WTC11 (cell line): ENCODE measurements at regions of chr11 and their contacts with region 1.

Region 1: DNA sequence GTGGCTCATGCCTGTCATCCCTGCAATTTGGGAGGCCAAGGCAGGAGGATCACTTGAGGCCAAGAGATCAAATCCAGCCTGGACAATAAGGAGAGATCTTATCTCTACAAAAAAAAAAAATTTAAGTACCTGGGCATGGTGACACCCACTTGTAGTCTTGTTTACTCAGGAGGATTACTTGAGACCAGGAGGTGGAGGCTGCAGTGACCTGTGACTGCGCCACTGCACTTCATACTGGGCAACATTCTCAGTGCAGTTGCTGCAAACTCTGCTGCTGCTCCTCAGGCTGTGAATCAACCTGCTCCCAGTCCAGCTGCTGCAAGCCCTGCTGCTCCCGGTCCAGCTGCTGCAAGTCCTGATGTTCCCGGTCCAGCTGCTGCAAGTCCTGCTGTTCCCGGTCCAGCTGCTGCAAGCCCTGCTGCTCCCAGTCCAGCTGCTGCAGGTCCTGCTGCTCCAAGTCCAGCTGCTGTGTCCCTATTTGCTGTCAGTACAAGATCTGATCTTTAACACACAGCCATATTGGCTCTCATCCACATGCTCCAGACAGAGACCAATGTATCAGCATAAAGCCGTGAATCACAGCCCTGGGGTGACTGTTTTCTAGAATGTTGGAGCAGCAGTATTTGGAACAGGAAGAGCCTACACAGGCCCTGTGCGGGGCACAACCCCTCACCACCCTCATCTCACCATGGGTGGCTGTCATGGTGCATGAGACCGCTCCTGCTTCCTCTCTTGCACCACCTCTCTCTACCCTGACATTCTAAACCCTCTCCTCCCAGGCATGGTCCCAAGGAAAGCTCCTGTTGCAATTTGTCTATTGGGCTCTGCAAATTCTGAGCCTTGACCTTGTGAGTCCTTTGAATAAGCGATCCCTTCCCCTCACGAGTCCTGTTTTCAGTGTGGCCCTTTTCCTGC is 3.3 kb downstream of the KRTAP5-10 start:
- DNase-seq: no peak
- ATAC-seq: peak; percentile 25
- H3K4me3 Mint-ChIP-seq: no peak overlapping the region
- H3K27ac Mint-ChIP-seq: peak overlapping the region; percentile 7; the same call in 1 of the 2 replicates
- H3K4me1 Mint-ChIP-seq: peaks cover 34% of the 10 kb centered on the region
- H3K27me3 Mint-ChIP-seq: peaks cover 3% of the 10 kb centered on the region
- CTCF ChIP-seq: no peak

Region 2: GRCh38 chr11:71580057-71581003 is 11.6 kb after region 1 on chr11:
- CTCF ChIA-PET with region 1: interaction called, 41 read pairs
- POLR2A ChIA-PET with region 1: no interaction called
- DNase-seq: peak; percentile 63
- ATAC-seq: peak; percentile 72
- H3K4me3 Mint-ChIP-seq: no peak overlapping the region
- H3K27ac Mint-ChIP-seq: no peak overlapping the region
- H3K4me1 Mint-ChIP-seq: peaks cover 32% of the 10 kb centered on the region
- H3K27me3 Mint-ChIP-seq: peaks cover 23% of the 10 kb centered on the region
- CTCF ChIP-seq: peak; percentile 57

Region 3: GRCh38 chr11:71787098-71787823 is 218.6 kb after region 1 on chr11:
- CTCF ChIA-PET with region 1: no interaction called
- POLR2A ChIA-PET with region 1: no interaction called
- DNase-seq: peak; percentile 97
- ATAC-seq: peak; percentile 91
- H3K4me3 Mint-ChIP-seq: peak overlapping the region; percentile 94
- H3K27ac Mint-ChIP-seq: peak overlapping the region; percentile 98
- H3K4me1 Mint-ChIP-seq: peaks cover 28% of the 10 kb centered on the region
- H3K27me3 Mint-ChIP-seq: no peaks in the 10 kb centered on the region; the same call in none of the 2 replicates
- CTCF ChIP-seq: no peak